ENCODE measurements at regions of chr5 and their contacts with region 1.

Region 1: GRCh38 chr5:42950440-42951292 is 89.5 kb downstream of the ANXA2R start:
- DNase-seq: peak; percentile 46 to 58
- ATAC-seq: peak; percentile 80 to 90
- H3K4me3 ChIP-seq: peak overlapping the region; percentile 60 to 74 (median 65)
- H3K27ac ChIP-seq: peak overlapping the region; percentile 80 to 84 (median 83)
- H3K4me1 ChIP-seq: peaks cover 22 to 33% of the 10 kb centered on the region in 2 donors
- H3K27me3 ChIP-seq: peaks cover 69 to 81% (median 69%) of the 10 kb centered on the region in 3 donors
- CTCF ChIP-seq: no peak
- POLR2A ChIP-seq: peak in 1 of 2 donors; percentile 44

Region 2: DNA sequence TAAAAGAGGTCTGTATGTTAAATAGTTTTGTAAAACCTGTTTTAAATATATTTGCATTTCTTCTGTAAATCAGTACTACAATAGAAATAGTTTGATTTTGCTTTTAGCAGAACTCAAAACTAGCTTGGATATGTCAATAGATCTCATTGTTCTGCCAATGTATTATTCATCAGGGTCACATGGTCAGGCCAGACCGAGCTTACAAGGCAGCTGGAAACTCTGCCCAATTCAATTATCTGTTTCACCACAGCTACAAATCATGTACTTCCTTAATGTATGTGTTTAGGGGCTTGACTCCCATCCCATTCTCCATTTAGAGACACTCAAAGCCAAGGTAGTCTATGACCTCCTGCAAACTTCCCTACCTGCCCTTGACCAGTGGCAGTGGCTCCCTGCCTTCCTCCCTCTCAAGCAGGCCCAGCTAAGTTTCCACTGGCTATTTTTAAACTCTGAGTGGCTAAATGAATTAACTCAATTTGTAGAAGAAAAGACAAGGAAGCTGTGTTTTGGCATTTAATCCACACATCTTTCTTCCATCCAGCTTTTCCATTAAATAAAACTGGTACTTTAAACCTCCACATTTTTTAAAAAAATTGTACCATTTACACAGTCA is 92.5 kb before region 1 on chr5:
- in situ Hi-C with region 1: no loop called
- intact Hi-C with region 1: no loop called
- DNase-seq: no peak
- ATAC-seq: peak; percentile 90 to 92
- H3K4me3 ChIP-seq: peak overlapping the region in 3 of 4 donors; percentile 1 to 4 (median 4)
- H3K27ac ChIP-seq: peak overlapping the region; percentile 63 to 83 (median 75)
- H3K4me1 ChIP-seq: peaks cover 17 to 24% of the 10 kb centered on the region in 2 donors
- H3K27me3 ChIP-seq: no peaks in the 10 kb centered on the region
- CTCF ChIP-seq: no peak
- POLR2A ChIP-seq: no peak

Region 3: DNA sequence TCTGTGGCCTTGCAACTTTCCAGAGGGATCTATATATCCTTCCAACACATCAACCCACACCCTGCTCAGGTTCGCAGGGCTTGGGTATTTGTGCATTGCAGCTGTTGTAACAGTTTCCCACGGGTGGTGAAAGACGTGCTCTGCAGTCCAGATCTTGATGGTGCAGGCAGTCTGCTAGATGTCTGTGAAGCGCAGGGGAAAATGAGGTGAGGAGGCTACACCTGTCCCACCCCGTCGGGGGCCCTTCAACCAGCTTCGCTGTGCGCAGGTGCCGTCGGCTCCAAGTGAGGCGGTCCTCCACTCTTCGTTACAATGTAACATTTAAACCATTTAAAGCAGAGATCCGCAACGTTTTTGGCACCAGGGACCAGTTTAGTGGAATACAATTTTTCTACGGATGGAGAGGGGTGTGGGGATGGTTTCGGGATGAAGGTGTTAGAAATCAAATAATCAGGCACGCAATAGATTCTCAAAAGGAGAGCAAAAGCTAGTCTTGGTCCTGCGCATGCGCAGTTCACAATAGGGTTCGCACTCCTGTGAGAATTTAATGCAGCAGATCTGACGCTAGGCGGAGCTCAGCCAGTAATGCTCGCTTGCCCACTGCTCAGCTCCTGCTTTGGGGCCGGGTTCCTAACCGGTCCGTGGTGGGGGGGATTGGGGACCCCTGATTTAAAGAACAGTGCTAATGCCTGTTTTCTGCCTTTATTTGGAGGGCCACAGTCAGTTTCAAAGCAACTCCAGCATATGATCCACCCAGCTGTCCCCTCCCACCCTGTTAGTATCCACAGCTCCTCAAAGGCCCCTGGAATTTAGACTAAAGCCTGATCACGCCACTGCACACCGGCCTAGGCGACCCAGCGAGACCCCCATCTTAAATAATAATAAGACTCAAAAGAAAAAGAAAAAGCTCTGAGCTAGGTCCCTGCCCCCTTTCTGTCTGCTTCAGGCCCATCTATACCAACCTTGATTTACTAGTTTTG is 41.9 kb before region 1 on chr5:
- in situ Hi-C with region 1: no loop called
- intact Hi-C with region 1: loop called (anchors 5 kb)
- DNase-seq: peak; percentile 75 to 81
- ATAC-seq: peak; percentile 92 to 96
- H3K4me3 ChIP-seq: peak overlapping the region; percentile 52 to 64 (median 56)
- H3K27ac ChIP-seq: peak overlapping the region in 1 of 4 donors; percentile 11
- H3K4me1 ChIP-seq: no peaks in the 10 kb centered on the region
- H3K27me3 ChIP-seq: no peaks in the 10 kb centered on the region
- CTCF ChIP-seq: peak; percentile 73 to 87 (median 83)
- POLR2A ChIP-seq: no peak

Region 4: GRCh38 chr5:43110606-43111442 is 160.2 kb after region 1 on chr5:
- in situ Hi-C with region 1: no loop called
- intact Hi-C with region 1: no loop called
- DNase-seq: no peak
- ATAC-seq: no peak
- H3K4me3 ChIP-seq: no peak overlapping the region
- H3K27ac ChIP-seq: no peak overlapping the region
- H3K4me1 ChIP-seq: peaks cover 0 to under 1% of the 10 kb centered on the region in 2 donors
- H3K27me3 ChIP-seq: no peaks in the 10 kb centered on the region
- CTCF ChIP-seq: no peak
- POLR2A ChIP-seq: no peak